Panc1 (cell line): ENCODE measurements at regions of chr1 and their contacts with region 1.

Region 1: GRCh38 chr1:245528258-245528635 is 373.5 kb downstream of the KIF26B start:
- DNase-seq: no peak
- ATAC-seq: no peak
- H3K4me3 ChIP-seq: no peak overlapping the region
- H3K27ac ChIP-seq: no peak overlapping the region
- H3K4me1 ChIP-seq: no peaks in the 10 kb centered on the region
- H3K27me3 ChIP-seq: peaks cover 20% of the 10 kb centered on the region
- CTCF ChIP-seq: no peak

Region 2: DNA sequence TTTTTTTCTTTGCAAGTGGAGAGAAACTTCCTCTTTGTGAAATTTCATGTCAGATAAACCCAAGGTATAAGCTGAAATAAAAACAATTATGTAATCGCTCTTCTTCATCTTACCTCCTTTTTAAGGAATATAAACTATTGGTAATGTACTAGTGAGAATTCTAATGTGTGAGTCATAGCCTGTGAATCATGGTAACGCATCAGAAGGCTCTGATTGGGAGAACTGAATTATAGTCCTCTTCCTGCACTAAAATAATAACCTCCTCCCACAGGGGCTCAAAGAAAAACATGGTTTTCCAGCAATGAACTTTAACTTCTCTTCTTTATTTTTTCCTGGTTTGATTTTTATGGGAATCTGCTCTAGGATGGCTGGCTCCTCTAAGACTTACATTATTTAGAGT is 749.9 kb before region 1 on chr1:
- CTCF ChIA-PET with region 1: no interaction called
- POLR2A ChIA-PET with region 1: no interaction called
- in situ Hi-C with region 1: no loop called
- intact Hi-C with region 1: no loop called
- DNase-seq: no peak
- ATAC-seq: no peak
- H3K4me3 ChIP-seq: no peak overlapping the region
- H3K27ac ChIP-seq: no peak overlapping the region
- H3K4me1 ChIP-seq: no peaks in the 10 kb centered on the region
- H3K27me3 ChIP-seq: no peaks in the 10 kb centered on the region
- CTCF ChIP-seq: no peak

Region 3: GRCh38 chr1:245245021-245245667 is 283.1 kb before region 1 on chr1:
- CTCF ChIA-PET with region 1: no interaction called
- POLR2A ChIA-PET with region 1: interaction called, 11 read pairs
- in situ Hi-C with region 1: no loop called
- intact Hi-C with region 1: no loop called
- DNase-seq: no peak
- ATAC-seq: no peak
- H3K4me3 ChIP-seq: no peak overlapping the region
- H3K27ac ChIP-seq: no peak overlapping the region
- H3K4me1 ChIP-seq: no peaks in the 10 kb centered on the region
- H3K27me3 ChIP-seq: no peaks in the 10 kb centered on the region
- CTCF ChIP-seq: no peak

Region 4: DNA sequence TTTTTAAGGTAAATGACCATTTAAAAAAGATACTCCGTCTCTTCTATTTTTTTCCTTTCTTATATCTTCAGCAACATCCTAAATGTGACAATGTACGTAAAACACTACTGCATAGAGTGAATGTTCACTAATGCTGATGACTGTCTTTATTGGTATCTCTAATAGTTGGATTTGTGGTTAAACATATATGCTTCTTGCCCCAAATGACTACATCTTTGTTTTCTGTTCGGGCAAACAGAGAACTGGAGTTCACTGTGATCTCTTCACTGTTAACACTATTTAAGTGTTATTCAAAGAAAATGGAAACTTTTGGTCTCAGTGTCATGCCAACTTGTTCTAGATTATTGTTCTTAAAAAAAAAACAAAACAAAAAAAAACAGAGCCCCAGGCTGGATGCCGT is 264.0 kb before region 1 on chr1:
- CTCF ChIA-PET with region 1: no interaction called
- POLR2A ChIA-PET with region 1: interaction called, 11 read pairs
- in situ Hi-C with region 1: no loop called
- intact Hi-C with region 1: no loop called
- DNase-seq: no peak
- ATAC-seq: no peak
- H3K4me3 ChIP-seq: no peak overlapping the region
- H3K27ac ChIP-seq: no peak overlapping the region
- H3K4me1 ChIP-seq: no peaks in the 10 kb centered on the region
- H3K27me3 ChIP-seq: peaks cover 8% of the 10 kb centered on the region
- CTCF ChIP-seq: no peak